ENCODE measurements at regions of chrX and their contacts with region 1.

Region 1: GRCh38 chrX:47581731-47582647 is at the start of gene TIMP1:
- DNase-seq: peak; percentile 90
- H3K4me3 ChIP-seq: peak within 1 kb of the TSS; percentile 3 to 60 (median 41)
- H3K27ac ChIP-seq: peak within 1 kb of the TSS; percentile 67
- H3K4me1 ChIP-seq: peaks cover 28% of the 10 kb centered on the region
- H3K27me3 ChIP-seq: no peaks in the 10 kb centered on the region
- CTCF ChIP-seq: no peak
- POLR2A ChIP-seq: peak; percentile 81
- total RNA-seq, gene TIMP1: 104 and 124 TPM in 2 replicates

Region 2: DNA sequence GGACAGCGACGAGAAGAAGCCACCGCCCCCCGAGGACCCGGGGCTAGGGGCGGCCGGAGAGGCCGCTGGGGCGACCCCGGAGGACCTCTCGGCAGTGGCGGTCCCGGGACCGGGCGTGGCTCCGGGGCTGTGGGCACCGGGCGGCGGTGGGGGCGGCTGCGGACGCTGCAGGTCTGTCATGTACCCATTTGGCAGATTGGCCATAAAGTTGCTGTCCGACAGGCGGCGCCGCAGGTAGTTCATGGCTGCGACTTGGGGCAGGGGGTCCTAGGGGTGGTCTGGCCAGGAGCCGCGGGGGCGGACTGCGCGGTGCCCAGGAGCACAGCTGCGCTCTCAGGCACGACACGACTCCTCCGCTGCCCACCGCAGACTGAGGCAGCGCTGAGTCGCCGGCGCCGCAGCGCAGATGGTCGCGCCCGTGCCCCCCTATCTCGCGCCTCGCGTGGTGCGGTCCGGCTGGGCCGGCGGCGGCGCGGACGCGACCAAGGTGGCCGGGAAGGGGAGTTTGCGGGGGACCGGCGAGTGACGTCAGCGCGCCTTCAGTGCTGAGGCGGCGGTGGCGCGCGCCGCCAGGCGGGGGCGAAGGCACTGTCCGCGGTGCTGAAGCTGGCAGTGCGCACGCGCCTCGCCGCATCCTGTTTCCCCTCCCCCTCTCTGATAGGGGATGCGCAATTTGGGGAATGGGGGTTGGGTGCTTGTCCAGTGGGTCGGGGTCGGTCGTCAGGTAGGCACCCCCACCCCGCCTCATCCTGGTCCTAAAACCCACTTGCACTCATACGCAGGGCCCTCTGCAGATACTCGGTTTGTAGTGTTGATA is 37.7 kb after region 1 on chrX and contains the start of gene SYN1:
- CTCF ChIA-PET with region 1: no interaction called
- POLR2A ChIA-PET with region 1: no interaction called
- dilution Hi-C with region 1: no loop called
- intact Hi-C with region 1: loop called (anchors 1 kb)
- DNase-seq: peak; percentile 60
- H3K4me3 ChIP-seq: peak within 1 kb of the TSS in 1 of 3 experiments; percentile 7
- H3K27ac ChIP-seq: no peak within 1 kb of the TSS
- H3K4me1 ChIP-seq: peaks cover 3% of the 10 kb centered on the region
- H3K27me3 ChIP-seq: peaks cover 5 to 8% of the 10 kb centered on the region in 2 experiments
- CTCF ChIP-seq: no peak
- POLR2A ChIP-seq: no peak
- total RNA-seq, gene SYN1: not detected in 2 replicates

Region 3: DNA sequence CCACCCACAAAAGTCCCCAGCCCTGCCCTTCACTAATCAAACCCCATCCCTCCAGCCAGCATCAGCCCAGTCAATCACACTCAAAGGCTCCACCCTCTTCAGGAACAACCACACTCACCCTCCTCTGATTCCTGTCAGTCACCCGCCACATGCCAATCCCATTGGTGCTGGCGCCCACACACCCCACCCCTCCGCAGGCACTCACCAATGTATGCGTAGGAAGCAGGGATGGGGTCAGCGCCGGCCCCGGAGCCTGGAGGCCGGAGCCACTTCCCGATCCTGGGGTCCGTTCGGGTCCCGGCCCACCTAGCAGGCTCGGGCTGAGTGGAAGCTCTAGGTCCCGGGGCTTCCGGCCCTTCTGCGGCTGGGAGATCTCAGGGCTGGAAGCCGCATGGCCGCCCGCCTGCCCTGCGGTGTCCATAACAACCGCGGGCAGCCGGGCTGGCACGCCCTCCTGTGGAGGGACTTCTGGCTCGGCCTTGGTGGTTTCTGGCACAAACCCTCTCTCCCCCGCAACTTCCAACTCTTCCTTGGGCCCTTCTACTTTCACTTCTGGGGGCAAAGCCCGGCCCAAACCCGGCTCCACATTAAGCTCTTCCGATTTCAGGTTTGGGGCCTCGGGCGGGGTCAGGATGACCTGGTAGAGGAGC is 55.7 kb after region 1 on chrX:
- CTCF ChIA-PET with region 1: no interaction called
- POLR2A ChIA-PET with region 1: no interaction called
- dilution Hi-C with region 1: no loop called
- intact Hi-C with region 1: loop called (anchors 5 kb)
- DNase-seq: peak; percentile 86
- H3K4me3 ChIP-seq: peak overlapping the region; percentile 3 to 44 (median 35)
- H3K27ac ChIP-seq: no peak overlapping the region
- H3K4me1 ChIP-seq: no peaks in the 10 kb centered on the region
- H3K27me3 ChIP-seq: no peaks in the 10 kb centered on the region
- CTCF ChIP-seq: peak; percentile 34 to 56
- POLR2A ChIP-seq: no peak